ENCODE measurements at regions of chr22 and their contacts with region 1.

Region 1: GRCh38 chr22:19948057-19948760 is 6.6 kb upstream of the TXNRD2 start:
- DNase-seq: no peak
- ATAC-seq: no peak
- H3K4me3 Mint-ChIP-seq: no peak overlapping the region
- H3K27ac Mint-ChIP-seq: no peak overlapping the region
- H3K4me1 Mint-ChIP-seq: peaks cover 31% of the 10 kb centered on the region
- H3K27me3 Mint-ChIP-seq: no peaks in the 10 kb centered on the region
- CTCF ChIP-seq: no peak

Region 2: GRCh38 chr22:19420321-19420720 is 527.9 kb before region 1 on chr22:
- CTCF ChIA-PET with region 1: no interaction called
- POLR2A ChIA-PET with region 1: interaction called, 11 read pairs
- intact Hi-C with region 1: no loop called
- DNase-seq: no peak
- ATAC-seq: no peak
- H3K4me3 Mint-ChIP-seq: no peak overlapping the region
- H3K27ac Mint-ChIP-seq: peak overlapping the region; percentile 41
- H3K4me1 Mint-ChIP-seq: peaks cover 41% of the 10 kb centered on the region
- H3K27me3 Mint-ChIP-seq: no peaks in the 10 kb centered on the region
- CTCF ChIP-seq: no peak

Region 3: GRCh38 chr22:19730655-19731360 is 217.4 kb before region 1 on chr22:
- CTCF ChIA-PET with region 1: interaction called, 18 read pairs
- POLR2A ChIA-PET with region 1: no interaction called
- intact Hi-C with region 1: loop called (anchors 1 kb)
- DNase-seq: peak; percentile 88
- ATAC-seq: peak; percentile 94
- H3K4me3 Mint-ChIP-seq: peak overlapping the region; percentile 74
- H3K27ac Mint-ChIP-seq: no peak overlapping the region
- H3K4me1 Mint-ChIP-seq: peaks cover 3% of the 10 kb centered on the region
- H3K27me3 Mint-ChIP-seq: peaks cover 2% of the 10 kb centered on the region
- CTCF ChIP-seq: peak; percentile 71

Measured in activated B cell treated with CpG ODN at 0.5 μM for 24 hours (primary cell).